ENCODE measurements at regions of chrX and their contacts with region 1.

Region 1: DNA sequence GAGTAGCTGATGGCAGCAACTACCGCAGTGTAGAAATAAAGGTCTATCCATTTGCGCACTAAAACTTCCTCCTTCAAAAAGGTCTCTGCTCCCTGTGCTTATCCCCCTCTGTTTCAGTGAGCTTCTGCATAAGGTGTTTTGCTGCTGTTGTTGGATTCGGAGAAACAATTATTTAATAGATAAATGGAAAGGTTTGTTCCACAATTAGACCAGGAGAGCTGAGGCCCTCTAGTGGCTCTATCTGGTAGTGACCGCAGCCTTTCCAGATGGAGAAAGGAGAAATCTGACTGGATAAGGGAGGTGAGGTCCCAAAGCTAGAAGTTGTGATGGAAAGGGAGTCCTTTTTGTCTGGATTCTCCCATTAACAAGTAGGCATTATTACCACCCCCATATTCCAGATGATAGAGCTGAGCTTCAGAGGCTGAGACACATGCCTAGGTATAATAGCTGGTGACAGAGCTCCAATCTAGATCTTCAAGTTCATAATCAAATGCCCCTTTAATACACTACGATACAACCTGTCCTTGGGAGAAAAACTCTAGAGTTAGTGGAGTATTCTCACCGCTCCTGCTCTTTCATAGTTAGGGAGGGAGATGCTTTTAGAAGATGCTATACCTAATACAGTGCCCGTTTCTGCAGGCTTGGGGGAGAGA is 5.1 kb upstream of the GABRQ start:
- DNase-seq: peak; percentile 53

Region 2: GRCh38 chrX:151753313-151754041 is 879.1 kb before region 1 on chrX:
- CTCF ChIA-PET with region 1: interaction called, 13 read pairs
- POLR2A ChIA-PET with region 1: no interaction called
- DNase-seq: peak; percentile 74

Region 3: GRCh38 chrX:152674135-152674534 is 41.6 kb after region 1 on chrX:
- CTCF ChIA-PET with region 1: no interaction called
- POLR2A ChIA-PET with region 1: no interaction called
- DNase-seq: no peak